MCF 10A (cell line): ENCODE measurements at regions of chr2 and their contacts with region 1.

Region 1: GRCh38 chr2:174919947-174920595 is 85.1 kb downstream of the CHN1 start:
- DNase-seq: no peak
- H3K4me3 Mint-ChIP-seq: no peak overlapping the region
- H3K27ac Mint-ChIP-seq: no peak overlapping the region
- H3K4me1 Mint-ChIP-seq: no peaks in the 10 kb centered on the region
- H3K27me3 Mint-ChIP-seq: no peaks in the 10 kb centered on the region
- CTCF ChIP-seq: no peak

Region 2: GRCh38 chr2:174868878-174869277 is 51.2 kb before region 1 on chr2:
- CTCF ChIA-PET with region 1: no interaction called
- POLR2A ChIA-PET with region 1: no interaction called
- intact Hi-C with region 1: loop called (anchors 10 kb)
- DNase-seq: no peak
- H3K4me3 Mint-ChIP-seq: no peak overlapping the region
- H3K27ac Mint-ChIP-seq: no peak overlapping the region
- H3K4me1 Mint-ChIP-seq: no peaks in the 10 kb centered on the region
- H3K27me3 Mint-ChIP-seq: no peaks in the 10 kb centered on the region
- CTCF ChIP-seq: no peak

Region 3: DNA sequence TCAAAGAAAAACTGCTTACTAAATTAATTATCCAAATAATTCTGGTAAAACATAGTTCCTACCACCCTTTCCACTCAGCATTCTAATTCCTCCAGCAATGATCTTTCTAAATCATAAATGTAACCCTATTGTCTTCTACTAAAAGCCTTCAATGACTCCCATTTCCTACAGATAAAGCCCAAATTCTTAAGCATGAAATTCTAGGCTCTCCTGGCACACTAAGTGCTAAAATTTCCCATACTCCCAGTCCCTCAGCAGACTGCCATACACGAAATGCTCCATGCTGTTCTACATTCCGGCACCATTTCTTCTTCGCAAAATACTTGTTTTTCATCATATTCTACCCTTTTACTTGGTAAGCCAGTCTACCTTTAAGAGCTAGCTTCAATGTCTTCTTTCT is 11.8 kb before region 1 on chr2:
- CTCF ChIA-PET with region 1: no interaction called
- POLR2A ChIA-PET with region 1: no interaction called
- intact Hi-C with region 1: no loop called
- DNase-seq: no peak
- H3K4me3 Mint-ChIP-seq: no peak overlapping the region
- H3K27ac Mint-ChIP-seq: no peak overlapping the region
- H3K4me1 Mint-ChIP-seq: no peaks in the 10 kb centered on the region
- H3K27me3 Mint-ChIP-seq: no peaks in the 10 kb centered on the region
- CTCF ChIP-seq: no peak